GM13977 (cell line): ENCODE measurements at regions of chr3 and their contacts with region 1.

Region 1: GRCh38 chr3:106609666-106610301 is 741.0 kb upstream of the CBLB start:
- DNase-seq: peak; percentile 31
- CTCF ChIP-seq: peak; percentile 80

Region 2: DNA sequence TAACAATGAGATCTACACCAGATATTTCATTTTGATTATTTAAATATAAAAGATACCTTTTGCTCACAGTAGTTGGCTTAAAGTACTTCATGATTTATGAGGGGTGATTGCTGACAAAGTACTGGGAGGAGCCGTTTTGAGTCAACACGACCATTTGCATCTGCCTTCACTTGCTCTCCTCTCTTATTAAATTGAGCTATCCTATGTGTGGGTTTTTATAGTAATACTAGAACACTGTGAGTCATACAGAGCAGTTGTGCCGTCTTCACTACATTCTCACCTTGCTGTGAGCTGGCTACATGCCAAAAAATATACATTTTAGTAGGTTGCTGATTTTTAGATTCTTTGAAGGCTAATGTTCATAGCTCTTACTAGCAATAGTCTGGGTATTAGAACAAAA is 1081.8 kb before region 1 on chr3:
- in situ Hi-C with region 1: loop called (anchors 25 kb)
- DNase-seq: peak; percentile 31
- CTCF ChIP-seq: no peak

Region 3: DNA sequence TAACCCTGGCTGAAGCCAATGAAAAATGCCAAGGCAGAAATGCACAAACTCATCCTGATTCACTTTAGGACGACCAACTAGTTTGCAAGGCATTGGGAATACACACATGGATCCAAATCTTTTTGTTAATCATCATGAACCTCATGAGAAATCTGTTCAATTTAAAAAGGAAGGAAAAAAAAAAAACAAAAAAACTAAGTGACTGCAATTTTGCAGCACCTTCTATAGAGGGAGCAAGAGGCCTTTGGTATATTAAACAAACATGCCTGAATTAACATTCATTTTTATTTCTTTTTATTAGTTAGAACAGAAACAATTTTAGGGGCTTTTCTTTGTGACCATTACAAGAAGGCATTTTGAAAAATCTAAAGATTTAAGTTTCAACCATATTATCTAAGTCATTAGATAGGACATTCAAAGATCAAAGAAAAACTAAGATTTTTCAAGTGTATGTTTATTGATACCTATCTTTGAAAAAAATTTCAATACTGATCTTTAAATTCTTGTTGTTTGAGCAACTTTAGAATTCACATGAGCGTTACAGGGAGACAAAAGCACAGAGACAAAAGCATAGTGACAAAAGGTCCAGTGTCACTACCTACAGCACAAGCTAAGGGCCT is 923.4 kb before region 1 on chr3:
- in situ Hi-C with region 1: loop called (anchors 25 kb)
- DNase-seq: peak; percentile 31
- CTCF ChIP-seq: peak; percentile 65

Region 4: DNA sequence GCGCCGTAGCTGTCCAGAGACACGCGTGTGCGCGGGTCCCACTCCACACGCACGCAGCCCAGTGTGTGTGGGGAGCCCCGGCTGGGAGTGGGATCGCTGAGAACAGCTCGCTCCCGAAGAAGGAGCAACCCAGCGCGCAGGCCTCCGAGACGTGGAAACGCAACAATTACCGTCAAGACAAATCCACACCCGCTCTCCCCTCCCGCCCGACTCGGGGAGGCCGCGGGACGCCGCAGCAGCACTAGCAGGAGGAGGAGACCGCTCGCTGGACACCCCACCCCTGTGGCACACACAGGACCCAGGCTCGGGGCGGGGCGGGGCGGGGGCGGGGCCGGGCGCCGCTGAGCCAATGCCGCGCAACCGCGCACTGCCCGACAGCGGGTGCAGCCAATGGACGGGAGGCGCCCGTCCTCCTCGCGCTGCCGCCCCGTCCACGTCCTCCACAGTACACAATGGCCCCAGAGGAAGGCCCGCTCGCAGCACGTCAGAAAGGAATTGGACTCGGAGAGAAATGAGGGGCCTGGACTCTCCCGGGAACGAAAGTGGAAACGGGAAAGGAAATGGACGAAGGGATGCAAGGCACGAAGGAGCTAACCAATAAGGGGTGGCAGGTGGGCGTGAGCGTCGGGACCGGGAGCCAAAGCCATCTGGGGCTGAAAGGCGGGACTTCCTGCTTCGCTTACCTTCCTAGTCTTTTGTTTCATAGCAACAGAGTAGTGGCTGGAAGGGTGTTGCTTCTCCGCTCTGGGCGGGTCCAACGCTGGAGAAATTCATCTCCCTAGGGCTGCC is 740.8 kb before region 1 on chr3 and contains the start of gene CBLB:
- in situ Hi-C with region 1: loop called (anchors 25 kb)
- DNase-seq: peak; percentile 91
- CTCF ChIP-seq: no peak

Region 5: GRCh38 chr3:106566277-106566676 is 43.5 kb before region 1 on chr3:
- in situ Hi-C with region 1: no loop called
- DNase-seq: peak; percentile 56
- CTCF ChIP-seq: peak; percentile 56